ENCODE measurements at regions of chr10 and their contacts with region 1.

Region 1: DNA sequence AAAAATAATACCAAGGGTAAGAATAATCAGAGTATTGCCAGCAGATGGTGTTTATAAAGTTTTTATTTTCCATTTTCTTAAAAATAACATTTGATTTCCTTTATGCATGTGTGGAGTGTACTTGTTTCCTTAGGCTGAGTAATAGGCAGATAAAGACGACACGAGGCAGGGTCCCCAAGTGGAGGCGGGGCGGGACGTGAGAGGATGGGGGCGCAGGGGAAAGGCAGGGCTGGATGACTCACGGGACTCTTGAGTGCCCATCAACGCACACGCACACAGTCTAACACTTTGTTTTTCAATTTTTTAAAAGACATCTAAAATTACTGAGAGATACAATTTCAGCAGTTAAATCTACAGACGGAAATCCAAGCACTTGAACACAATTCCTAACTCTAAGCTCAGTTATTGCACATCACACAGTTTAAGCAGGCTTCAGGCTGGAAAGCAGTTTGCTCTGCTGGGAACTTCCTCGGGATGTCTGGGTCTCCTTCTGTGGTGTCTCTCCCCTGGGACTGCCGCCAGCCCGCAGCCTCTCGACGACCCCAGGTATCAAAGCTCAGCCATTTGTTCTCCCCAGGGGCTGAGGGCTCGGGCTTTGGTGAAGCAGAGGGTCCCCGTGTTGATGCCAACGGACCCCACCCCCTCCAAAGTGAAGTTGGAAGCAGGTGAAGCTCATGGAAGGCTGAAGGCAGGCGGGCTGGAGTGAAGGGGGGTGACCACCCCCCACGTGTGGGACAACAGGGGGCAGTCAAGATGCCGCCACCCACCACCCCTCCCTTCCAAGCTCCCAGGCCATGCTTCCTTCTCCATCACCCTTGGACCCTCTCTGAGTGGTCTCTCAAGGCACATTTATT is 29.1 kb downstream of the SPOCK2 start:
- DNase-seq: no peak
- ATAC-seq: no peak
- H3K4me3 ChIP-seq: no peak overlapping the region
- H3K27ac ChIP-seq: no peak overlapping the region
- H3K4me1 ChIP-seq: no peaks in the 10 kb centered on the region
- H3K27me3 ChIP-seq: no peaks in the 10 kb centered on the region
- CTCF ChIP-seq: no peak
- POLR2A ChIP-seq: no peak

Region 2: DNA sequence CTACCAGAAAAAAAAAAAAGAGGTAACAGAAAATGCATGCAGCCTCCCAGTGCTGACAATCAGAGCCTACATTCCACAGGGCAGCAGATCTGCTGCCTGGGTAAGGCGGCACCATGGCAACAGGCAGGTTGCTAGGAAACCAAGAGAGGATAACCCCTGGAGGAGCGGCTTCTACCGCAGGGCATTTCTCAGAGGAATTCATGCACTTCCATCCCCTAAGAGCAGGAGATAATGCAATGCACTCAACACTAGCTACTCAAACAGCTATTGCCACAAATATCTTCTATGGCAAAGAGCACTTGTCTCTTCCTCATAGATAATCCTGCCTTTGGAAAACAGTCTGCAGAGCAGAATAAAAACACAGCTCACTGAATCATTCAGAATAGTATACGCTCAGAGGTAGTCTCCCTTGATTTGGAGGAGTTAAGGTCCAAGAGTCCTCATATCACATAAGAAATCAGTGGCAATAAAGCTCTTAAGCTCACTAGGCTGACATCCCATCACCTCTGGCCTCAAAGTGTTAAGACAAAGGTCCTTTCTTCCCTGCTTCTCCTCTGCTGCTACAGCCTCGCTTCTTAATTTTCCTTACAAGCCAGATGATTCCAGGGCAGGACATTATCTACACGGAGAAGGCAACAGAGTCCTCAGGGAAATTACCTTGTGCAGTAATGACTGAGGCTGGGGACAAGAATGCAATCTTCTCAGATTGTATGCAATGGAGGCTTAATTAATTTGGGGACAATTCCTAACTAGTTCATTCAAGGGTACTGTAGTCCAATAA is 218.8 kb before region 1 on chr10:
- intact Hi-C with region 1: no loop called
- DNase-seq: no peak
- ATAC-seq: no peak
- H3K4me3 ChIP-seq: no peak overlapping the region
- H3K27ac ChIP-seq: no peak overlapping the region
- H3K4me1 ChIP-seq: peaks cover 0 to 75% (median 13%) of the 10 kb centered on the region in 4 donors
- H3K27me3 ChIP-seq: no peaks in the 10 kb centered on the region
- CTCF ChIP-seq: no peak
- POLR2A ChIP-seq: no peak

Region 3: DNA sequence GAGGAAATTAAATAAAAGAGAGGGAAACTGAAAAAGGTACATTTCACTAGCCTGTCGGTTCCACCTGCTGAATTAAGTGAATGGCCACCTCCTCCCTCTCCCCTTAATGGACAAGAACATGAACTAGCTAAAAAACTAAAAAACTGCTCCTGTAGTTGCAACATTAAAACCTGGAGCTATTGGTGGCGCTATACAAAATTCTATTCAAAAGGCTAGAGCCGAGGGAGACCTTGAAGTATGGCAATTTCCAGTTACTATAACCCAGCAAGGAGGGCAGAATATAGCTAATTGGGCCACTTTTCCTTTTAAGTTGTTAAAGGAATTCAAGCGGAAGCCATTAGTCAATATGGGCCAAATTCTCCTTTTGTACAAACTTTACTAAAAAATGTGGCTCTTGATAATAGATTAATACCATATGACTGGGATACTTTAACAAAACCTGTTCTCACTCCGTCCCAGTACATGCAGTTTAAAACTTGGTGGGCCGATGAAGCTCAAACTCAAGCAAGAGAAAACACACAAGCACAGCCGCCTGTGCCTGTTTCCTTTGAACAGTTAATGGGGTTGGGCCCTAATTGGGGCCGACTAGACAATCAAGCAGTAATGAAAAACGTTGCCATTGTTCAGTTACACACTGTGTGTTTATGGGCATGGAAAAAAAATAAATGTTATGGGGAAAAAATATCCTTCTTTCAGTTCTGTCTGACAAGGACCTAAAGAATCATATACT is 101.5 kb before region 1 on chr10:
- intact Hi-C with region 1: loop called in 1 of 2 experiments (anchors 10 kb)
- DNase-seq: no peak
- ATAC-seq: no peak
- H3K4me3 ChIP-seq: no peak overlapping the region
- H3K27ac ChIP-seq: no peak overlapping the region
- H3K4me1 ChIP-seq: no peaks in the 10 kb centered on the region
- H3K27me3 ChIP-seq: no peaks in the 10 kb centered on the region
- CTCF ChIP-seq: no peak
- POLR2A ChIP-seq: no peak

Region 4: GRCh38 chr10:71974489-71975021 is 84.7 kb before region 1 on chr10:
- intact Hi-C with region 1: no loop called
- DNase-seq: no peak
- ATAC-seq: peak in 1 of 4 donors; percentile 37
- H3K4me3 ChIP-seq: no peak overlapping the region
- H3K27ac ChIP-seq: no peak overlapping the region
- H3K4me1 ChIP-seq: peaks cover 0 to 22% (median 14%) of the 10 kb centered on the region in 4 donors
- H3K27me3 ChIP-seq: no peaks in the 10 kb centered on the region
- CTCF ChIP-seq: no peak
- POLR2A ChIP-seq: no peak

Measured in right lobe of liver (tissue), 6 donors.